ENCODE measurements at regions of chr17 and their contacts with region 1.

Region 1: DNA sequence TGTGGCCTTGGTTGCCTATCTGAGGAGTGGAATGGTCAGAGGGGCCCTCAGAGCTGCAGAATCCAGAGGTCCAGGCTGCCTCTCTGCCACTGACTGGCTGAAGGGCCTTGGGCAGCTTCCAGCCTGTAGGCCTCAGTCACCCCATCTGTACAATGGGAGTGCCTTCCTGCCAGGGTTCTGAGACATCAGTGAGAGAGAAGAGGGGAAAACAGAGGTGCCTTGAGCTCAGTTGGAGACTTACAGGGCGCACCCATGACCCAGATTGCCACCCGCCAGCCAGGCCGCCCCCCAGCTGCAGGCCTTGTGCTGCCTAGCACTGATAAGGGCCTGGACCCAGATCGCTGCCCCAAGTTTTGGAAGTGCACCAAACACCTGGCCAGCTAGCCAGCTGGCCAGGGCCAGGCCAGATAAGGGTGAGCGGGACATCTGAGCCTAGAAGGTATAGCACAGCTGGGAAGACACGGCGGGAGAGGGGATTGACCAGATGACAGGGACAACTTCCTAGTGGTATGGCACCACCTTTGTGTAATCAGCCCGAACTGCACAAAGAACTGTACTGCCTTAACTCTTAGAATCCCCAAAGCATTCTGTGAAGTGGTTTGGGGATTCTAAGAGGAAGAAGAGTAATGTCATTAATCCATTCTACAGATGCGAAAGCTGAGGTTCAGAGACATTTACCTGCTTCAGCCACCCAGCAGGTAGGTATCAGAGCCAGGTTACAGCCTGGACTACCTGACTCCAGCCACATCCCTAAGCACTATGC is 1.4 kb downstream of the SLC4A1 start:
- DNase-seq: peak; percentile 93 to 97 (median 96)
- ATAC-seq: peak; percentile 90
- H3K4me3 ChIP-seq: no peak overlapping the region
- H3K27ac ChIP-seq: no peak overlapping the region
- H3K4me1 ChIP-seq: peaks cover 37 to 52% of the 10 kb centered on the region in 2 experiments
- H3K27me3 ChIP-seq: no peaks in the 10 kb centered on the region
- CTCF ChIP-seq: peak; percentile 68 to 74 (median 72)
- EP300 ChIP-seq: peak; percentile 98
- POLR2A ChIP-seq: no peak
- RAD21 ChIP-seq: peak; percentile 38 to 76

Region 2: DNA sequence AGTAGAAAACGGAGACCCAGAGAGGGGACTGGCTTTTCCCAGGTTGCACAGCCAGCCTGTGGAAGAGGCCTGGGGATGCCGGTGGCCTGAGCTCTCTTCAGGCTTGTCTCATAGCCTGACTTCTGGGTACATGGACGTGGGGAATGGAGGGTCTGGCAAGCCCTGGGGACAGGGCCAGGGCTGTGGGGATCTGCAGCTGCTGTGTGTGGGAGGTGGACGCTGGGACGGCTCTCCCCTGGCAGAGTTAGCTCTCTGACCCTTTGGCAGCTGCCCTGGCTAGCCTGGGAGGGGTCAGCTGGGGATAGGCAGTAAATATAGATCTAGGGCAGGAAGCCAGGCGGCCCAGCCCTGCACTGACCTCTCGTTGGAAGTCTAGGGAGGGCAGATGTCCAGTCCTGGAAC is 19.1 kb before region 1 on chr17:
- CTCF ChIA-PET with region 1: no interaction called
- POLR2A ChIA-PET with region 1: no interaction called
- in situ Hi-C with region 1: no loop called
- intact Hi-C with region 1: loop called (anchors 1 kb)
- DNase-seq: no peak
- ATAC-seq: no peak; the same call in 1 of the 3 replicates
- H3K4me3 ChIP-seq: no peak overlapping the region
- H3K27ac ChIP-seq: no peak overlapping the region
- H3K4me1 ChIP-seq: peaks cover 25 to 38% of the 10 kb centered on the region in 2 experiments; a peak in 4 of 5 replicates
- H3K27me3 ChIP-seq: peaks cover 0 to 2% of the 10 kb centered on the region in 2 experiments; a peak in 1 of 5 replicates
- CTCF ChIP-seq: no peak
- EP300 ChIP-seq: no peak
- POLR2A ChIP-seq: no peak
- RAD21 ChIP-seq: no peak

Region 3: DNA sequence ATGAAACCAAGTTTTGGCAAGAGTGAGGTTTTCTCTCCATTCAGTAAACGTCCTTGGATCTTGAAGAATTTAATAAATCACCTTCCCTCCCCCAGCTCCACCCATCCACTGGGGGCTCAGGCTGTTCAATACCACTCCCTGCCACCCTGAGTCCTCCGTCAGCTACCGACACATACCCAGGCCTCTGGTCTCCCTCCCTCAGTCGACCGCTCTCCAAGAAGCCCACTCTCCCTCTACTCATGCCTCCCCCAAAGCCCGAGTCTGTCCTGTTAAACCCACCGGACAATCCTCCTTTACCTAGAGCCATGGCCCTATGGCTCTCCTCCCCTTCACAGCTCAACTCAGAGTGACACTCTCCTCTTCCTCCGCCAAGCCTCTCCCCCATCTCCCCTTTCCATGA is 21.1 kb after region 1 on chr17:
- CTCF ChIA-PET with region 1: no interaction called
- POLR2A ChIA-PET with region 1: interaction called, 5 read pairs
- in situ Hi-C with region 1: no loop called
- intact Hi-C with region 1: loop called (anchors 2 kb)
- DNase-seq: no peak
- ATAC-seq: peak; percentile 32
- H3K4me3 ChIP-seq: peak overlapping the region; percentile 14; the same call in 1 of the 2 replicates
- H3K27ac ChIP-seq: peak overlapping the region; percentile 93
- H3K4me1 ChIP-seq: peaks cover 43 to 51% of the 10 kb centered on the region in 2 experiments
- H3K27me3 ChIP-seq: no peaks in the 10 kb centered on the region
- CTCF ChIP-seq: no peak
- EP300 ChIP-seq: no peak
- POLR2A ChIP-seq: no peak
- RAD21 ChIP-seq: no peak

Region 4: DNA sequence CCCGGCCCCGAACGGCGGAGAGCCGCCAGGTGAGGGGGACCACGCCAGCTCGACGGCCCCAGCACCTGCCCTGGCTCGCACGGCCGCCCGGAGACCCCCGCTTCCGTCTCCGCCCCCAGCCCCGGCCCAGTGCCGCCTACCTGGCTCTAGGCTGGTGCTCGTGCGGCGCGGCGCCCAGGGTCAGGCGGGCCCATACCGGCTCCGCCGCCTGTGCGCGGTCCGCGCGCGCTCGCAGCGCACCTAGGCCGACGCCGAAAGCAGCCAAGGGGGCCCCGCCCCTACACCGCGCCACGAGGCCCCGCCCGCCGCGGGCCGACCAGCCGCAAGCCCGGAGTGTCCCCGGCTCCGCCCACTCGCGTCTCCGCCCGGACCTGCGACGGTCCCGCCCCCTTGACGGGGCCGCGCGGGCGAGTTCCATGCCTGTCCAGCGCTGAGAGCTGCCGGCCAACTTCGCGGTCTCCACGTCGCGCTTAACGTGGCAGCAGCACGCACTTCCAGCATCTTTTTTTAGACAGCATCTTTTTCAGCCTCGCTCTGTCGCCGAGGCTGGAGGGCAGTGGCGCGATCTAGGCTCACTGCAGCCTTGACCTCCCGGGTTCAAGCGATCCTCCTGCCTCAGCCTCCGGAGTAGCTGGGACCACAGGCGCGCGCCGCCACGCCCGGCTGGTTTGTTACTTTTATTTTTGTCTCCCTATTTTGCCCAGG is 58.1 kb after region 1 on chr17 and contains the start of gene SLC25A39:
- CTCF ChIA-PET with region 1: no interaction called
- POLR2A ChIA-PET with region 1: interaction called, 4 read pairs
- in situ Hi-C with region 1: no loop called
- intact Hi-C with region 1: loop called (anchors 2 kb)
- DNase-seq: peak; percentile 93 to 97 (median 94)
- ATAC-seq: peak; percentile 85
- H3K4me3 ChIP-seq: peak within 1 kb of the TSS; percentile 85
- H3K27ac ChIP-seq: peak within 1 kb of the TSS; percentile 83
- H3K4me1 ChIP-seq: peaks cover 9 to 72% of the 10 kb centered on the region in 2 experiments; a peak in 4 of 5 replicates
- H3K27me3 ChIP-seq: no peaks in the 10 kb centered on the region
- CTCF ChIP-seq: no peak
- EP300 ChIP-seq: no peak
- POLR2A ChIP-seq: peak; percentile 66; the same call in 1 of the 2 replicates
- RAD21 ChIP-seq: no peak; a peak in 1 of 4 replicates
- polyA plus RNA-seq, gene SLC25A39: 4.8 to 6.3 TPM